ENCODE measurements at regions of chr11 and their contacts with region 1.

Region 1: DNA sequence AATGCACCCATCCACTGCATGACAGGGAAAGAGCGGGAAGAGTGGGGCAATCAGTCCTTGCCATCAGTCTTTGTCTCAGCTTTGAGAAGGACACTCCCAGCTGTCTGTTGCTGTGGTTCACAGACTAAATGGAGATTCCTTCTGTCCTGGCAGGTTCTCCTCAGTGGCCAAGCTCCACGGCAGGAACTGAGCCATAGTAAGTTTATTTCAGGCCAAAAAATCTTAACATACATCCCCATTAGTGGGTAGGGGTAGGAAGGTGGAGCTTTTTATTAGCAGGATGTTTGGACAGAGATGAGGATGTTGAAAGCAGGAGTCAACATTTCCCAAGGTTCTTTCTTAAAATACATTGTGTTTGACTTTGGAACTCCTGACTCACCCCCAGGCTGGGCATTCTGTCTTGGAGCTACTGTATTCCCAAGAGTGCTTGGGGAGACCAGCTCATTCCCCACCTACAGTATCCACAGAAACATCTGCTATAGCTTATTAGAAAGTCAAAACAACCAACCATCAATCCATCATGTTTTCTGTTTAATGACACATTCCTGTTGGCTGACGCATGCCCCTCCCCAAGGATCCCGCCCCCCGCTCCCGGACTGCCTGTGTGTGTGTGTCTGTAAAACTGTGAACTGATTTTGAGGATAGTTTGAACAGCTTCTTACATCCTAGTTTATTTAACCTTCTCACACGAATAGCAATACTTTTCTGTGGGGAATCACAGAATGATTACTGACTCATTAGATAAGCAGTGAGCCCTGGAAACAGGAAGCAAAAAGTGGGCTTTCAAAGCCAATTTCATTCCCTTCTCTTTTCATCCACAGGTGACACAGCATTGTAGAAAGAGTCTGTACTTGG is 109.5 kb downstream of the CCDC81 start:
- DNase-seq: peak; percentile 100
- H3K4me3 ChIP-seq: no peak overlapping the region
- H3K27ac ChIP-seq: peak overlapping the region; percentile 94
- H3K4me1 ChIP-seq: peaks cover 47% of the 10 kb centered on the region
- H3K27me3 ChIP-seq: no peaks in the 10 kb centered on the region
- CTCF ChIP-seq: no peak
- POLR2A ChIP-seq: peak; percentile 39

Region 2: GRCh38 chr11:86068951-86069407 is 415.2 kb before region 1 on chr11 and contains the start of gene PICALM:
- CTCF ChIA-PET with region 1: no interaction called
- POLR2A ChIA-PET with region 1: no interaction called
- dilution Hi-C with region 1: no loop called
- intact Hi-C with region 1: loop called (anchors 5 kb)
- DNase-seq: peak; percentile 99
- H3K4me3 ChIP-seq: peak within 1 kb of the TSS; percentile 47 to 94 (median 89)
- H3K27ac ChIP-seq: peak within 1 kb of the TSS; percentile 100
- H3K4me1 ChIP-seq: peaks cover 27% of the 10 kb centered on the region
- H3K27me3 ChIP-seq: no peaks in the 10 kb centered on the region
- CTCF ChIP-seq: no peak
- POLR2A ChIP-seq: peak; percentile 82
- total RNA-seq, gene PICALM: 181 and 202 TPM in 2 replicates

Region 3: DNA sequence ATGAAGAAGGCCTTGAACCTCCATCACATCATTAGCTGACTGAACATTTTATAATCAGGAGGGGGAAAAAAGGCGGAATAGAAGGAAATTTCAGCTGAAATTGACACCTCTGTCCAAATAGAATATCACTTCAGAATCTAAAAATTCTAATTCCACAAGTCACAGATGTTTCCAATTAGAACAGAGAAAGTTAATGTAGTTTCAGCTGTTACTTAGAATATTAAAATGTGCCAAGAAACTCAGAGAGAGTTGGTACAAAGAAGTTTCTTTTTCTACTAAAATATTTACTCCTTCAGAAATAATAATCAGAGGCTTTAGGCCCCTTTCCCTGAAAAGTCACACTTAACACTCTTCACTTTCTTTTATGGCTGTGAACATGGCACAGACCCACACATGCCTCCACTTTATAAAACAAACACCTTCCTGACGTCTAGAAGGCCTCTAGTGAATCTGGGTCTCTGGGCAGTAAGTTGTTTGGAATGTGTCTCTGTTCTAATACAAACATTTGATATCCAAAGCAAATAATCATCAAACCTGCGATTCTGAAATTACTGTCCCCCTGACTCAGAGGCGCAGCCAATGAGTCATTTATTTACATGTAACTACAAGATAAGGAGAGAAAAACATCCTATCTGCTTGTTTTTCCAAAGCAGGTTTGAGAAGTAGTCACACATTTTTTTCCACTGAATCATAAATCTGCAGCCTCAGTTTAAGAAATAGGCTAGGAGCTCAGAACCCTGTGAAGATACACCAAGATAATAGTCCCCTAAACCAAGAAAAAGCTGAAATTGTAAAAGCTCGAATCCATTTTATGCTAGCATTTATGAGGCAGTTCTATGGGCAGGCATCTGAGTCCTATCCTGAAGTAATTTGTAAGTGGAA is 39.8 kb after region 1 on chr11:
- CTCF ChIA-PET with region 1: interaction called, 24 read pairs
- POLR2A ChIA-PET with region 1: interaction called, 9 read pairs
- dilution Hi-C with region 1: no loop called
- intact Hi-C with region 1: loop called (anchors 1 kb)
- DNase-seq: peak; percentile 99
- H3K4me3 ChIP-seq: peak overlapping the region in 1 of 3 experiments; percentile 14
- H3K27ac ChIP-seq: peak overlapping the region; percentile 93
- H3K4me1 ChIP-seq: peaks cover 46% of the 10 kb centered on the region
- H3K27me3 ChIP-seq: no peaks in the 10 kb centered on the region
- CTCF ChIP-seq: no peak
- POLR2A ChIP-seq: peak; percentile 54

Region 4: GRCh38 chr11:86577663-86578636 is 93.8 kb after region 1 on chr11:
- CTCF ChIA-PET with region 1: interaction called, 5 read pairs
- POLR2A ChIA-PET with region 1: no interaction called
- dilution Hi-C with region 1: loop called (anchors 25 kb)
- intact Hi-C with region 1: loop called (anchors 1 kb)
- DNase-seq: peak; percentile 98
- H3K4me3 ChIP-seq: no peak overlapping the region
- H3K27ac ChIP-seq: peak overlapping the region; percentile 63
- H3K4me1 ChIP-seq: peaks cover 59% of the 10 kb centered on the region
- H3K27me3 ChIP-seq: no peaks in the 10 kb centered on the region
- CTCF ChIP-seq: no peak
- POLR2A ChIP-seq: no peak

Region 5: GRCh38 chr11:86671682-86672621 is 187.8 kb after region 1 on chr11 and contains the start of gene ME3:
- CTCF ChIA-PET with region 1: no interaction called
- POLR2A ChIA-PET with region 1: no interaction called
- dilution Hi-C with region 1: no loop called
- intact Hi-C with region 1: loop called (anchors 1 kb)
- DNase-seq: peak; percentile 80
- H3K4me3 ChIP-seq: peak within 1 kb of the TSS; percentile 60 to 88 (median 85)
- H3K27ac ChIP-seq: peak within 1 kb of the TSS; percentile 91
- H3K4me1 ChIP-seq: peaks cover 31% of the 10 kb centered on the region
- H3K27me3 ChIP-seq: no peaks in the 10 kb centered on the region
- CTCF ChIP-seq: no peak
- POLR2A ChIP-seq: peak; percentile 80
- total RNA-seq, gene ME3: 26.9 and 27.2 TPM in 2 replicates

Region 6: GRCh38 chr11:86696004-86696403 is 211.8 kb after region 1 on chr11:
- CTCF ChIA-PET with region 1: no interaction called
- POLR2A ChIA-PET with region 1: no interaction called
- dilution Hi-C with region 1: no loop called
- intact Hi-C with region 1: no loop called
- DNase-seq: peak; percentile 84
- H3K4me3 ChIP-seq: no peak overlapping the region
- H3K27ac ChIP-seq: peak overlapping the region; percentile 56
- H3K4me1 ChIP-seq: peaks cover 15% of the 10 kb centered on the region
- H3K27me3 ChIP-seq: no peaks in the 10 kb centered on the region
- CTCF ChIP-seq: no peak
- POLR2A ChIP-seq: no peak

Region 7: DNA sequence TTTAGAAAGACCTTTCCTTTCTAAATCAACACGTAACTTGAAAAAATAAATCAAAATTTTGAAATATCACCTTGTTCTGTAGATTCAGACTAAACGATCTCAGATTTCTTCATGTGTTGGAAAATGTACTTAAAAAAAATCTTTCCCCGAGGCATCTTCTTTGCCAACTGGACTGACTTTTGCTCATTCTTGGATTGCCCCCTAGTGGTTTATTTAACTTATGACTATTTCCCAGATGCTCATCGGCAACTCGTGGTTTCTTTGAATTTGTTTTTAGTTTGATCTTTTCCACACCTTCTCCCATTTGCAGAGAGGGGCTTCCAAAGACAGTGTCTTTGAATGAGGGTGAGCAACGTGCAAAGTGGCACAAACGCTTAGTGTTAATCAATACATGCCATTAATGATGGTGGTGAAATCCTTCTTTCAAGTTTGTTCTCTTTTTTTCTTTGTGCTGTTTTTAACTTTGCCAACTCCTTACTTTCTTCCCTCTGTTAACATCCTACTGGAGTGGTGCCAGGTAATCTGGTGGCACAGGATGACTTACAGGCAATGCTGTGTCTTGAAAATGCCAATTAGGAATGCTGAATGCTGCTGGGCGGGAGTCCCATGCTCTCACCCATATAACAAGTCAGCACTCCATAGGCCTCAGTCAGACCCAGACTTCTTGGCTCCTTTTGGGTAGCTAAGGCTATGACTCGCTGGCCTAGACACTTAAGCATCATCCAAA is 334.5 kb after region 1 on chr11:
- CTCF ChIA-PET with region 1: no interaction called
- POLR2A ChIA-PET with region 1: interaction called, 3 read pairs
- dilution Hi-C with region 1: no loop called
- intact Hi-C with region 1: loop called (anchors 1 kb)
- DNase-seq: peak; percentile 84
- H3K4me3 ChIP-seq: no peak overlapping the region
- H3K27ac ChIP-seq: peak overlapping the region; percentile 77
- H3K4me1 ChIP-seq: peaks cover 53% of the 10 kb centered on the region
- H3K27me3 ChIP-seq: no peaks in the 10 kb centered on the region
- CTCF ChIP-seq: peak; percentile 41 to 45
- POLR2A ChIP-seq: no peak